Right ventricle myocardium inferior (tissue), 1 donor: ENCODE measurements at regions of chr20 and their contacts with region 1.

Region 1: GRCh38 chr20:34363062-34363464 is at the start of gene ITCH:
- DNase-seq: peak; percentile 99
- ATAC-seq: peak; percentile 99
- total RNA-seq, gene ITCH: 39.8 TPM

Region 2: DNA sequence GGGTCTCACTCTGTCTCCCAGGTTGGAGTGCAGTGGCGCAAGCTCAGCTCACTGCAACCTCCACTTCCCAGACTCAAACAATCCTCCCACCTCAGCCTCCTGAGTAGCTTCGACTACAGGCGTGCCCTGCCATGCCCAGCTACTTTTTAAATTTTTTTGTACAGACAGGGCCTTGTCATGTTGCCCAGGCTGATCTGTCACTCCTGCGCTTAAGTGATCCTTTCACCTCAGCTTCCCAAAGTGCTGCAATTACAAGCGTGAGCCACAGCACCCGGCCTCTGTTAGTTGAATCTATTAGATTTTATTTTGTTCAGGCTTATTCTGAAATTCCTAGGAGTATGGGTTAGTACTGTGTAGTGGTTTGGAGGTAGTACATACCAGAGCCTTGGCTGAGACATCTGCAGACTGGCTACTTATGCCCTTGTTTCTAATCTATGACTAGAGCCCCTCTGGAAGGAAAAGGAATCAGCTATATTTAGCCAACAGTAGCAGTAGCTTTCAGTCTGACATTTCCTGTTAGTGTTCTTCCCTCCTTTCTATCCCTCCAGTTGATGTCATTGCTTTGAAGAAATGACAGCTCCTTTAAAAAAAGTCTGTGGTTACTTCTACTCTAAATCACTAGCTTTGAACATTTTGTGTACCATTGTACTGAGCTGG is 74.4 kb after region 1 on chr20:
- intact Hi-C with region 1: loop called (anchors 5 kb)
- DNase-seq: no peak
- ATAC-seq: peak; percentile 75